AG04449 (cell line): ENCODE measurements at regions of chr10 and their contacts with region 1.

Region 1: DNA sequence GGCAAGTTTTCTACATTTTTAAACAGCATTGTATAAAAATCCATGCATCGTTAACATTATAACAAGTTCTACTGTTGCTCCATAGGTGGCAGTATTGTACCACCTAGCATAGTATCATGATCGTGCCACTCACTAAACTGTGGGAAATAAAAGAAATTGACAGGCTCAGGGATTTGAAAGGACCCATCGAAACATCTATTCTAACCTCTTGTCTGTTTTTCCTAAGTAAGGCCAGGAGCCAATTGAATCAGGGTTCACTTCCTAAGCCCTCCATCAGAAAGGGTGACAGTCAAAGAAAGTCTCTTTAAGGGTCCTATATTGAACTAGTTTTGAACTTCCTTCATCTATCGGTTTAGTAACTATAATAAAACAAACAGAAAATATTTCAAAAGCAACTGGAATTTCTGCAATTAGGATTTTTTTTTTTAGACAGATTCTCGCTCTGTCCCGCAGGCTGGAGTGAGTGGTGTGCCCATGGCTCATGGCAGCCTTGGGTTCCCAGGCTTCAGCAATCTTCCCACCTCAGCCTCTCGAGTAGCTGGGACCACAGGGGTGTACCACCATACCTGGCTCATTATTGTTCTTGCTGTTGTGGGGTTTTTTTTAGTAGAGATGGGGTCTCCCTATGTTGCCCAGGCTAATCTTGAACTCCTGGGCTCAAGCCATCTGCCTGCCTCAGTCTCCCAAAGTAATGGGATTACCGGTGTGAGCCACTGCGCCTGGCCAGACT is 9.4 kb downstream of the HACD1 start:
- DNase-seq: no peak
- H3K4me3 ChIP-seq: no peak overlapping the region
- CTCF ChIP-seq: peak; percentile 62

Region 2: DNA sequence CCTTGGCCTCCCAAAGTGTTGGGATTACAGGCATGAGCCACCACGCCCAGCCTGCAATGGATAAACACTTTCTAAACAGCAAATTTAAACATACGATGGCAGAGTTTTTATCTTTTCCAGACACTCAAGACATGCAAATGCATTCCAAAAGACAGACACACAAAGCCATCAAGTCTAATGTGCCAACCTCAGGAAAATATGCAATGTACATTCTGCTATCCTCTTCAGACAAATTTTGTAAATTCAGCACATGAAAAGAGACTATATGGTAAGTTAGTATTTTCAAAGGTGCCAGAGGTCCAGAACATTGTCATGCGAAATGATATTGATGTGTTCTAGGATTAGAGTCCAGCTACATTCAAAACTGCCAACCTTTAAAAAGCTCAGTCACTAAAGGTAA is 10.4 kb before region 1 on chr10:
- CTCF ChIA-PET with region 1: interaction called, 11 read pairs
- POLR2A ChIA-PET with region 1: no interaction called
- DNase-seq: no peak
- H3K4me3 ChIP-seq: no peak overlapping the region
- CTCF ChIP-seq: no peak

Region 3: DNA sequence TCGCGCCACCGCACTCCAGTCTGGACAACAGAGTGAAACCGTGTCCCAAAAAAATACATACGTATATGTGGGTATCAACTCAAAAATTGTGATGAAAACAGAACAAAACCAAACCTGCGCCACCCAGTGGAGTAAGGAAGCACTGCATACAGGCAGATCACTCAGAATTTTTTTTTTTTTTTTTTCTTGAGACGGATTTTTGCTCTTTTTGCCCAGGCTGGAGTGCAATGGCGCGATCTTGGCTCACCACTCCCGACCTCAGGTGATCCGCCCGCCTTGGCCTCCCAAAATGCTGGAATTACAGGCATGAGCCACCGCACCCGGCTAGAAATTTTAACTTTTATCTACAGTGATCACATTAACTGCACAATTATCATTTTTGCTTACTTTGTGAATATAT is 135.2 kb after region 1 on chr10:
- CTCF ChIA-PET with region 1: interaction called, 46 read pairs
- POLR2A ChIA-PET with region 1: no interaction called
- DNase-seq: no peak
- H3K4me3 ChIP-seq: no peak overlapping the region
- CTCF ChIP-seq: peak; percentile 70